Prostate gland (tissue), 2 donors: ENCODE measurements at regions of chr2 and their contacts with region 1.

Region 1: GRCh38 chr2:152407204-152407721 is 72.3 kb downstream of the FMNL2 start:
- DNase-seq: peak; percentile 24
- H3K4me3 ChIP-seq: no peak overlapping the region
- H3K27ac ChIP-seq: peak overlapping the region in 1 of 2 donors; percentile 16
- H3K4me1 ChIP-seq: peaks cover 3% of the 10 kb centered on the region
- H3K27me3 ChIP-seq: no peaks in the 10 kb centered on the region
- CTCF ChIP-seq: no peak
- POLR2A ChIP-seq: no peak

Region 2: GRCh38 chr2:152627351-152627957 is 220.2 kb after region 1 on chr2:
- intact Hi-C with region 1: loop called (anchors 10 kb)
- DNase-seq: no peak
- H3K4me3 ChIP-seq: no peak overlapping the region
- H3K27ac ChIP-seq: no peak overlapping the region
- H3K4me1 ChIP-seq: no peaks in the 10 kb centered on the region
- H3K27me3 ChIP-seq: no peaks in the 10 kb centered on the region
- CTCF ChIP-seq: peak in 3 of 4 experiments; percentile 39 to 65 (median 57)
- POLR2A ChIP-seq: no peak

Region 3: DNA sequence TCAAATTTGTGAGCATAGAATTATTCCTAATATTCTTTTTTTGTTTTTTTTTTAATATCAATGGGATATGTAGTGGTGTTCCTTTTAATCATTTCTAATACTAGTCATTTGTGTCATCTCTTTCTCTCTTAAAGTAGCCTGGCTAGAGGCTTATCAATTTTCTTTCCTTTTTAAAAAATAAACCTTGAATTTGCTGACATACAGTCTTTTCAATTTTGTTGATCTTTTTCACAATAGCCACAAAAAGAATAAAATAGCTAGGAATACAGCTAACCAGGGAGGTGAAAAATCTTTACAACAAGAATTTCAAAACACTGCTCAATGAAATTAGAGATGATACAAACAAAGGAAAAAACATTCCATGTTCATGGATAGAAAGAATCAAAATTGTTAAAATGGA is 503.7 kb after region 1 on chr2:
- intact Hi-C with region 1: no loop called
- DNase-seq: no peak
- H3K4me3 ChIP-seq: no peak overlapping the region
- H3K27ac ChIP-seq: no peak overlapping the region
- H3K4me1 ChIP-seq: no peaks in the 10 kb centered on the region
- H3K27me3 ChIP-seq: no peaks in the 10 kb centered on the region
- CTCF ChIP-seq: no peak
- POLR2A ChIP-seq: no peak